PC-9 (cell line): ENCODE measurements at regions of chr1 and their contacts with region 1.

Region 1: DNA sequence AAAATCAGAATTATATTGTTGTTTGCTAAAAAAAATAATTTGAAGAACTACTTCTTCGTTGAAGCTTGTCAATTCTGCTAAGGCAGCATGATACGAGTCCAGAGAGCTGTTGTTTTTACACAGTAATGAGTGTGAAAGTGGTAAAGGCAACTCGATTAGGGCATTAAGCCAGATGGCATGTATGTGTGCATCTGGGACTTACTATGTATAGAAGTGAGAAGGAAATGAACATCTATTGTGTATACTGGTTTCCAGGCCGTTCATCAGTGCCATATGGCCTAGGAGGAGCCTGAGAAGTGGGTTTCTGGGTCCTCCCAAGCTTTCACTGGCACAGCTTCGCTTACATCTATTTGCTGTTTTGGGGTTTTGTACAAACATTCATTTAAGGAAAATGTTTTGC is 5.7 kb downstream of the CTPS1 start:
- DNase-seq: no peak
- H3K4me3 ChIP-seq: no peak overlapping the region
- H3K27ac ChIP-seq: no peak overlapping the region
- H3K4me1 ChIP-seq: peaks cover 16% of the 10 kb centered on the region
- H3K27me3 ChIP-seq: no peaks in the 10 kb centered on the region
- CTCF ChIP-seq: no peak

Region 2: DNA sequence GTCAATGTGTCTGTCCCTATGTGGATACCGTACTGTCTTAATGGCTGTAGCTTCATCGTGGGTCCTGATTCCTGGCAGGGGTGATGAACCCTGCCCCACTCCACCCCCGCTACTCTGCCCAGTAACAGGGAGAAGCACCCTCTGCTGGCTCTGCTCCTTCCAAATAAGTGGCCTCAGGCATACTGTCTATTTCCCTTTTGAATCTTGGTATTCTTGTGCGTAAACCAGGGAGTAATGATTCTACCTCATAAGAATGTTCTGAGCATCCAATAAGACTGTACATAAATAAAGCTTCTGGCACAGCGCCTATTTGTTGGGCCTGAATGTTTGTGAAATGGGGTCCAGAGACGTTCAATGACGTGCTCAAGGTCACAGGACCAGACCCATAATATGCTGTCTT is 40.8 kb before region 1 on chr1:
- CTCF ChIA-PET with region 1: no interaction called
- POLR2A ChIA-PET with region 1: no interaction called
- intact Hi-C with region 1: no loop called
- DNase-seq: peak; percentile 53 to 60
- H3K4me3 ChIP-seq: no peak overlapping the region
- H3K27ac ChIP-seq: no peak overlapping the region
- H3K4me1 ChIP-seq: peaks cover 32% of the 10 kb centered on the region
- H3K27me3 ChIP-seq: no peaks in the 10 kb centered on the region
- CTCF ChIP-seq: no peak

Region 3: GRCh38 chr1:40998683-40999082 is 13.5 kb after region 1 on chr1:
- CTCF ChIA-PET with region 1: interaction called, 11 read pairs
- POLR2A ChIA-PET with region 1: interaction called, 12 read pairs
- intact Hi-C with region 1: no loop called
- DNase-seq: no peak
- H3K4me3 ChIP-seq: no peak overlapping the region
- H3K27ac ChIP-seq: no peak overlapping the region
- H3K4me1 ChIP-seq: peaks cover 13% of the 10 kb centered on the region
- H3K27me3 ChIP-seq: no peaks in the 10 kb centered on the region
- CTCF ChIP-seq: no peak